Activated naive CD4-positive, alpha-beta T cell treated with anti-CD3 and anti-CD28 coated beads for 36 hours (primary cell): ENCODE measurements at regions of chr20 and their contacts with region 1.

Region 1: GRCh38 chr20:46681032-46681854 is 8.0 kb downstream of the TP53RK start:
- DNase-seq: peak; percentile 86
- H3K4me3 Mint-ChIP-seq: no peak overlapping the region
- H3K27ac Mint-ChIP-seq: no peak overlapping the region
- H3K4me1 Mint-ChIP-seq: peaks cover 28% of the 10 kb centered on the region
- H3K27me3 Mint-ChIP-seq: no peaks in the 10 kb centered on the region

Region 2: DNA sequence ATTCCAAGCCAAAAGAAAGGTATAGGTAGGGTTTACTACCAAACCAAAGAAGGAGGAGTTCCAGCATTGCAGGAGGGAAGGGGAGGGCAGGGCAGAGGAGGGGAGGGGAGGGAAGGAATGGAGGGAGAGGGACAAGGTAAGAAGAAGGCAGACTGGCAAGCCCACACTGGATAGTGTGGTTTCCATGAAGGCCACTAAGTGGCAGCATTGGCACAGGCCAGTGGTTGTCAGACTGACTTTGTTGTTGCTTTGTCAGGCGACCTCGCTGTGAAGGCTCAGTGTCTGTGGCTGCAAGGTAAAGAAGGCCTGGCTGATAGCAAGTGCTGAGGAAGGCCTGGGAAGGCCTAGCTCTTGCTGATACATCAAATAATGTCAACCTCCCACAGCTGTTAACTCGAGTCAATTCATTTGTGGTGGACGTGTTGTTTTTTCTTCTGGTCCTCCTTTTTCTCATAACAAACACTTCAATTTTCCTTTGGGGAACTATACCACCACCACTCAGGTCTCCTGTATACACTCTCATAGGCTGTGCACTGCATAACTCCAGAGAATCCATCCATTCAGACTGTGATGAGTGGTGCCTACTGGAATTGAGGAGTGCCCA is 160.2 kb before region 1 on chr20:
- CTCF ChIA-PET with region 1: interaction called, 14 read pairs
- intact Hi-C with region 1: loop called (anchors 1 kb)
- DNase-seq: peak; percentile 70
- H3K4me3 Mint-ChIP-seq: no peak overlapping the region
- H3K27ac Mint-ChIP-seq: no peak overlapping the region
- H3K4me1 Mint-ChIP-seq: no peaks in the 10 kb centered on the region
- H3K27me3 Mint-ChIP-seq: peaks cover 23% of the 10 kb centered on the region

Region 3: DNA sequence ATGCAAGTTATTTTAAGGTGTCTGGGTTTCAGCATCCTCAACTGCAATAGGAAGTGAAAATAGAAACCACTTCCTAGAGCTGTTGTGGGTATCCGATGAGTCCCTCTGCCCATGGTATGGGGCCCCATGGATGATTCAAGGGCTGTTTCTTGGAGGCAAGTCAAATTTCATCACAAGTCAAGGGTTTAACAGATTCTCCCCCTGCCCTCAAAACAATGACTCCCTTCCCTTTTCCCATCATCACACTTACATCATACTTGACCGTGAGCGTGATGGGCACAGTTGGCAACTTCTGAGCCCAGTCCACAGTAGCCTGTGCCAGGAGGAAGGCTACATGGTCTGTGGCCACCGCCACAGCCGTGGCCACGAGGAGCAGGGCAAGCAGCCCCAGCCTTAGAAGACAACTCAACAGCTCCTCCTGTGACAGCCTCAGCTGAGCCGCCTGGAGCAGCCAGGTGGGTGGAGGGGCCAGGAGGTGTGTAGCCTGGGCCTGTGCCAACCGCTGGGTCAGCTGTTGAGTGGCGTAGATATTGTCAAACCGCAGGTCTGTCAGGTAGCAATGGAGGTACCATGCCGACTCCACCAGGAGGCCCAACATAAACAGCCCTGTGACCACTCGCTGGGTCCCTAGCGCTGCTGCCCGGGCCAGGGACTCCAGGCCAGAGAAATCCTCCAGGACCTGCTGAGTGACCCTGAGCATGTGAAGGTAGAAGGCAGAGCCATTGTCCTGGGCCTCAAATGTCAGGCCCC is 136.0 kb before region 1 on chr20:
- CTCF ChIA-PET with region 1: interaction called, 5 read pairs
- intact Hi-C with region 1: loop called (anchors 5 kb)
- DNase-seq: peak; percentile 77
- H3K4me3 Mint-ChIP-seq: no peak overlapping the region
- H3K27ac Mint-ChIP-seq: peak overlapping the region; percentile 71
- H3K4me1 Mint-ChIP-seq: peaks cover 7% of the 10 kb centered on the region
- H3K27me3 Mint-ChIP-seq: peaks cover 9% of the 10 kb centered on the region